ENCODE measurements at regions of chr7 and their contacts with region 1.

Region 1: DNA sequence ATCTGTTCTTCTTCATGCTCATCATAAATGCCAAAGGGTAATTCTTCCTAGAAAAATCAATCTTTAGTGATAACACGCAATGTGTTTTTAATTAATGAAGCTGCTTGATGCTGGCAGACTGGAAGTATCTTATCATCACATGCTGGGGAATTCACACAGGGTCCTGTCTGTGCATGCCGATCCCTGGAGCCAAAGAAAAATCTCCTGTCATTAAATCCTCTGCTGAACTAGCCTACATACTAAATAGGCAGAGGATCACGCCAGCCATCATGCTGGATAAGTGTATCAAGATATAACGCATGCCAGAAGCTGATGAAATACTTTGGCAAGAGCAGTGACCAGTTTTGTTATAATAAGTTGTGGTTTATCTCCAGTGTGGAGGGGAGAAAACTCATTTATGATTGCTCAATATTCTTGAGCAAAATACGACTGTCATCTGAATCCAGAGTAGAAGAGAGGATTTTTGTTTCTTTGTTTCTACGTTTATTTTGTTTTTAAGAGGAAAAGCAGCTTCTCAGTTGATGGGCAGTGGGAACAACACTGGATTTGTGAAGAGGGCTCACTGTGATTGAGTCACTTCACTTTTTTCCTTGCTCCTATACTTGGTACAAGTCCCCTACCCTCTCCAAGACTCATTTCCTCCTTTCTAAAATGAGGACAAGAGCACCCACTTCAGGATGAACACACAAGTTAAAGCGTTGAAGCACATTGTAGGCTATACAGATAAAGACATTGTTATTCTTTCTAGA is 649.1 kb downstream of the TNS3 start:
- DNase-seq: peak; percentile 92
- H3K4me3 ChIP-seq: peak overlapping the region in 2 of 3 experiments; percentile 18 to 25
- H3K27ac ChIP-seq: peak overlapping the region; percentile 95
- H3K4me1 ChIP-seq: peaks cover 36% of the 10 kb centered on the region
- H3K27me3 ChIP-seq: no peaks in the 10 kb centered on the region
- CTCF ChIP-seq: peak; percentile 41 to 55

Region 2: GRCh38 chr7:46554688-46555422 is 378.0 kb before region 1 on chr7:
- CTCF ChIA-PET with region 1: no interaction called
- dilution Hi-C with region 1: no loop called
- in situ Hi-C with region 1: no loop called
- intact Hi-C with region 1: loop called (anchors 5 kb)
- DNase-seq: peak; percentile 75
- H3K4me3 ChIP-seq: no peak overlapping the region
- H3K27ac ChIP-seq: no peak overlapping the region
- H3K4me1 ChIP-seq: peaks cover 14% of the 10 kb centered on the region
- H3K27me3 ChIP-seq: no peaks in the 10 kb centered on the region
- CTCF ChIP-seq: no peak

Region 3: DNA sequence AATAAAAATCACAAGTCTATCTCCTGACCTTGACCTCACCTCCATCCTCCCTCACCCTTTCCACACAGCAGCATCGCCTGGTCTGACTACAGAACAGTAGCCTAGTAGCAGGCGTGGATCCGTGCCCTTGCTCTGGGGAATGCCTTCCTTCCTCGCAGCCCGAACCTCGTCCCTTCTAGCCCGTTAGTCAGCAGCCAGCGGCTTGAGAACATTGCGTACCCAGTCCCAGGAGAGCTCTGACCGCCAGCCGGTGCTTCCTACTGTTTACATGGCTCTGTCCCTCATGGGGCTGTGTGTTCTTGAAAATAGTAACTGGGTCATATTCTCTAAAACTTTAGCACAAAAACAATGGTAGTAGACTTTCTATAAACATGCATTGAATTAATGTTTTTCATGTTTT is 329.1 kb before region 1 on chr7:
- CTCF ChIA-PET with region 1: no interaction called
- dilution Hi-C with region 1: no loop called
- in situ Hi-C with region 1: no loop called
- intact Hi-C with region 1: no loop called
- DNase-seq: no peak
- H3K4me3 ChIP-seq: no peak overlapping the region
- H3K27ac ChIP-seq: no peak overlapping the region
- H3K4me1 ChIP-seq: no peaks in the 10 kb centered on the region
- H3K27me3 ChIP-seq: no peaks in the 10 kb centered on the region
- CTCF ChIP-seq: no peak

Region 4: GRCh38 chr7:46764100-46764936 is 168.5 kb before region 1 on chr7:
- CTCF ChIA-PET with region 1: no interaction called
- dilution Hi-C with region 1: no loop called
- in situ Hi-C with region 1: no loop called
- intact Hi-C with region 1: no loop called
- DNase-seq: peak; percentile 96
- H3K4me3 ChIP-seq: no peak overlapping the region
- H3K27ac ChIP-seq: peak overlapping the region; percentile 35
- H3K4me1 ChIP-seq: peaks cover 15% of the 10 kb centered on the region
- H3K27me3 ChIP-seq: no peaks in the 10 kb centered on the region
- CTCF ChIP-seq: no peak

Region 5: DNA sequence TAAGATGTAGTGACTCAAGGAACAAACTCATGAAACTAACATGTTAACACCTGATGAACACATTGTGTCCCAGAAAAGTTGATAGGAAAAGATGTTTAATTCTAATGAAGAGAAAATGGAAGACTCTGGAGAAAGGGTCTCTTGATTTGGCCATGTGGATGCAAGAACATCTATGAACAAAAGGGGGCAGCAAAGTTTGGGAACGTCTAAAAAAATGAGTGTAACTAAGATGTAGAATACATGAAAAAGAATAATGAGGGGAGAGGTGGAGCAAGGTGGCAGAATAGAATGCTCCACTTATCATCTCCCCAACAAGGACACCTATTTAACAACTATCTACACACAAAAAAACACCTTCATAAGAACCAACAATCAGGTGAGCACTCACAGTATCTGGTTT is 156.1 kb before region 1 on chr7:
- CTCF ChIA-PET with region 1: no interaction called
- dilution Hi-C with region 1: no loop called
- in situ Hi-C with region 1: loop called in 1 of 2 experiments (anchors 10 kb)
- intact Hi-C with region 1: loop called (anchors 1 kb)
- DNase-seq: peak; percentile 16
- H3K4me3 ChIP-seq: no peak overlapping the region
- H3K27ac ChIP-seq: no peak overlapping the region
- H3K4me1 ChIP-seq: no peaks in the 10 kb centered on the region
- H3K27me3 ChIP-seq: no peaks in the 10 kb centered on the region
- CTCF ChIP-seq: peak; percentile 49 to 58

Region 6: GRCh38 chr7:46811529-46811928 is 121.3 kb before region 1 on chr7:
- CTCF ChIA-PET with region 1: no interaction called
- dilution Hi-C with region 1: no loop called
- in situ Hi-C with region 1: no loop called
- intact Hi-C with region 1: loop called (anchors 1 kb)
- DNase-seq: peak; percentile 73
- H3K4me3 ChIP-seq: no peak overlapping the region
- H3K27ac ChIP-seq: no peak overlapping the region
- H3K4me1 ChIP-seq: peaks cover 10% of the 10 kb centered on the region
- H3K27me3 ChIP-seq: no peaks in the 10 kb centered on the region
- CTCF ChIP-seq: no peak

Region 7: GRCh38 chr7:46955531-46955930 is 22.7 kb after region 1 on chr7:
- CTCF ChIA-PET with region 1: no interaction called
- dilution Hi-C with region 1: no loop called
- in situ Hi-C with region 1: no loop called
- intact Hi-C with region 1: no loop called
- DNase-seq: no peak
- H3K4me3 ChIP-seq: no peak overlapping the region
- H3K27ac ChIP-seq: no peak overlapping the region
- H3K4me1 ChIP-seq: no peaks in the 10 kb centered on the region
- H3K27me3 ChIP-seq: no peaks in the 10 kb centered on the region
- CTCF ChIP-seq: no peak

Region 8: GRCh38 chr7:46972205-46972604 is 39.4 kb after region 1 on chr7:
- CTCF ChIA-PET with region 1: no interaction called
- dilution Hi-C with region 1: no loop called
- in situ Hi-C with region 1: no loop called
- intact Hi-C with region 1: no loop called
- DNase-seq: peak; percentile 67
- H3K4me3 ChIP-seq: no peak overlapping the region
- H3K27ac ChIP-seq: peak overlapping the region; percentile 76
- H3K4me1 ChIP-seq: peaks cover 17% of the 10 kb centered on the region
- H3K27me3 ChIP-seq: no peaks in the 10 kb centered on the region
- CTCF ChIP-seq: no peak

Region 9: GRCh38 chr7:47088329-47089067 is 155.6 kb after region 1 on chr7:
- CTCF ChIA-PET with region 1: no interaction called
- dilution Hi-C with region 1: no loop called
- in situ Hi-C with region 1: no loop called
- intact Hi-C with region 1: loop called (anchors 1 kb)
- DNase-seq: peak; percentile 31
- H3K4me3 ChIP-seq: no peak overlapping the region
- H3K27ac ChIP-seq: no peak overlapping the region
- H3K4me1 ChIP-seq: peaks cover 10% of the 10 kb centered on the region
- H3K27me3 ChIP-seq: no peaks in the 10 kb centered on the region
- CTCF ChIP-seq: peak; percentile 87 to 89